ENCODE measurements at regions of chr10 and their contacts with region 1.

Region 1: DNA sequence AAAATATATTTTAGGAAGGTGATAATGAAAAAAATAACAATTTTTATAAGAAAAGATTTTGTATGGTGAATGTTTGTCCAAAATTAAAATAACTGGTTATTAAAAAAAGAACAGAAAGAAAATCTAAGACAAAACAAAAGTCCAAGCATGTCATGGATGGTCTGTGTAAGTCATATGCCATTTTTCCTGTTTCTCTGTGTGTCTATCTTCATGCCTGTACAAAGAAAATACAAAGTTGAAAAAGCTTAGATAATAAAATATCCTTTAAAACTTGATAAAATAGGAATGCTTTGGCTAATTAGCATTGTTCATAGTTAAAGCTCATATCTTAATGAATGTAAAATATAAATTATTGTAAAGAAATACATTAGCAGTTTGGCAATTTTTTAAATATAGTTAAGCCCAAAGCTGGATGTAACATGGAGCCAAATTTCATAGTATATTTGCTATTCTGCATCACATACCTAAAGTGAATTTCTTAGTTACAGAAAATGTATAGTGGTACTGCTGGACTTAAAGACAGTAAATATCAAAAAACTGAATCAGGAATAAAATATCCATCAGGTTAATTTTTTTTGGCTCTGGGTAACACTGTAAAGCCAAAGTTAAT is 661.1 kb downstream of the PCDH15 start:
- DNase-seq: no peak
- H3K4me3 ChIP-seq: no peak overlapping the region
- H3K27ac ChIP-seq: no peak overlapping the region
- H3K4me1 ChIP-seq: no peaks in the 10 kb centered on the region
- H3K27me3 ChIP-seq: no peaks in the 10 kb centered on the region
- CTCF ChIP-seq: no peak
- EP300 ChIP-seq: no peak
- POLR2A ChIP-seq: no peak

Region 2: DNA sequence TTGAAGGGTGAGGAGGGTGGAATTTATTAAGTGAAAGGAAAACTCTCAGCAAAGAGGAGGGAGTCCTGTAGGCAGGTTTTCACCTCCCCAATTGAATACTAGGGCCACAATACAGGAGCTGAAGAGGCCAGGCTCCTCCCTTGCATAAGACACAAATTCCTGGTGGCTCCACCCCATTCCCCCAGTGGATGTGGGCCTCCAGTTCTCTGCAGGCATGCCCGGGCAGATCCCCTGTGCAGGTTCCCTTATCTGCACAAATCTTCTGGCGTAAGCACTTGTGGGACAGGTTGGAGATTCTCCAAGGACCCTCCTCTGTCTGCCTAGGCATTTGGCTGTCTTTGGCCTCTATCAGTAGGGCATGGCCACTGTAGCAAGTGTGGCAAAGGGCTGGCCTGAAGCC is 520.3 kb before region 1 on chr10:
- in situ Hi-C with region 1: no loop called
- intact Hi-C with region 1: no loop called
- DNase-seq: no peak
- H3K4me3 ChIP-seq: no peak overlapping the region
- H3K27ac ChIP-seq: no peak overlapping the region
- H3K4me1 ChIP-seq: no peaks in the 10 kb centered on the region
- H3K27me3 ChIP-seq: no peaks in the 10 kb centered on the region
- CTCF ChIP-seq: no peak
- EP300 ChIP-seq: no peak
- POLR2A ChIP-seq: no peak

Region 3: GRCh38 chr10:54108961-54109360 is 31.0 kb before region 1 on chr10:
- in situ Hi-C with region 1: no loop called
- intact Hi-C with region 1: loop called (anchors 5 kb)
- DNase-seq: no peak
- H3K4me3 ChIP-seq: no peak overlapping the region
- H3K27ac ChIP-seq: no peak overlapping the region
- H3K4me1 ChIP-seq: no peaks in the 10 kb centered on the region
- H3K27me3 ChIP-seq: no peaks in the 10 kb centered on the region
- CTCF ChIP-seq: no peak
- EP300 ChIP-seq: no peak
- POLR2A ChIP-seq: no peak

Measured in transverse colon (tissue), 4 donors.